Lower leg skin (tissue), 4 donors: ENCODE measurements at regions of chrX and their contacts with region 1.

Region 1: DNA sequence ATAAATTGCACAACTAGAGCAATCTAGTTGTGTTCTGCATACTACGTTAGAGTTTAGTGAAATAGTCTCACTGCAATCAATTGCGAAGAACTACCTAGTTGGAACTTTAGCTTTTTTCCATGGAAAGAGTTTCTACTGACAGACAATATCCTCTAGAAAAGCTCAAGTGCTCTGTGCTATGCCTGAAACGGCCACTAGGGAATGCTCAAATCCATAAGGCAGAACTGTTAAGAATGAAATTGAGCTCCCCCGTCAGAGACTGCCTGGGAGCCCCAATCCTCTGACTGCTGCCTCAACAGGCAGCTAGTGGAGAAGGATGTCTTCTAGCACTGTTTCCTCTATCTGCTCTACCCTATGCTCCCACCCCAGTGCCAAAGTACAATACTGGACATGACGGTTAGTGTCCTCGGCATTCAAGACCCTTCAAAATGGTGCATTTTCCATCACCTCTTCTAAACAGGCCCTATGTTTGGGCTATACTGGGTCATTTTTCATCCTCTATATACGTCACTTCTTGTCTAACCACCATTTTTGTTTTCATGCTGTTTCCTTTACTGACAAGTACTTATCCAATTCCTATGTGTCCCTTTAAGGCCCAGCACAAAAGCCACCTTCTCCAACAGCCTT is 35.3 kb downstream of the FRMD7 start:
- DNase-seq: peak in 1 of 2 donors; percentile 34
- H3K4me3 ChIP-seq: no peak overlapping the region
- CTCF ChIP-seq: no peak
- POLR2A ChIP-seq: no peak

Region 2: DNA sequence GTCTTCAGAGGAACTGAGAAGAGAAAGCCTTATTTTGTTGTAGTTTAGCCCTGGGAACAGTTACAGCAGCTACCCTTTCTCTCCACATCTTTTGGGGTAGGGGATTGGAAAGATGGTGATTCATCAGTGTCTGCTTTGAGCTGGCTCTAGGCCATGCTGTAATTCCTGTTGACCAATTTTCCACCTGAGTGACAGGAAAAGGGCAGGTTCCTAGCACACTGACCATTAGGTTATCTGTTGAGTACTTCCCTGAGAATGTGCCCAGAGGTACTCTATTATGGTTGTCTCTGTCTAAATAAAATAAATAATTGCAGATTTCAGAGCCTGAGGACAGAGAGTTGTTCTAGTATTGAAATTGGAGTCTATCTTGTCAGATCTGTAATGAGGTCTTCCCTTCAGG is 1298.6 kb before region 1 on chrX:
- intact Hi-C with region 1: no loop called
- DNase-seq: no peak
- H3K4me3 ChIP-seq: no peak overlapping the region
- CTCF ChIP-seq: no peak
- POLR2A ChIP-seq: no peak

Region 3: GRCh38 chrX:132206259-132206658 is 113.7 kb after region 1 on chrX:
- intact Hi-C with region 1: no loop called
- DNase-seq: no peak
- H3K4me3 ChIP-seq: no peak overlapping the region
- CTCF ChIP-seq: no peak
- POLR2A ChIP-seq: no peak

Region 4: DNA sequence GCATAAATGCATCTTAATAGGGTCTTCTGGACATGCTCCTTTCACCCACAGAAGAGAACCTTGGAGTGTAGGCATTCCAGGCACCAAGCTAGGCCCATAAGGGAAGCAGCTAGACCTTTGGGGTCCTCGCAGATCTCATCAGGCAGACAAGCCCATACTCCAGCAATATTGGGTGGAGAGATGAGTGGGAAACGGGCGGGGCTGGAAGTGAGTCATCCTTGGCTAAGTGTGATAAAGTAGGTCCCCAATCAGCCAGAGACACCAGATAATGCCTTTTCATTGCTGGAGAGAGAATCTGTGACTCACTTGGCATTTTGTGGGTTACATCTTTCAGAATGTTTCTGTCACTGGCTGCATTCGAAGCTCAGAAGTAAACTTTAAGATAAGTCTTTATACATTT is 529.6 kb after region 1 on chrX:
- intact Hi-C with region 1: loop called (anchors 10 kb)
- DNase-seq: no peak
- H3K4me3 ChIP-seq: no peak overlapping the region
- CTCF ChIP-seq: no peak
- POLR2A ChIP-seq: no peak